Lower leg skin (tissue), 4 donors: ENCODE measurements at regions of chrX and their contacts with region 1.

Region 1: DNA sequence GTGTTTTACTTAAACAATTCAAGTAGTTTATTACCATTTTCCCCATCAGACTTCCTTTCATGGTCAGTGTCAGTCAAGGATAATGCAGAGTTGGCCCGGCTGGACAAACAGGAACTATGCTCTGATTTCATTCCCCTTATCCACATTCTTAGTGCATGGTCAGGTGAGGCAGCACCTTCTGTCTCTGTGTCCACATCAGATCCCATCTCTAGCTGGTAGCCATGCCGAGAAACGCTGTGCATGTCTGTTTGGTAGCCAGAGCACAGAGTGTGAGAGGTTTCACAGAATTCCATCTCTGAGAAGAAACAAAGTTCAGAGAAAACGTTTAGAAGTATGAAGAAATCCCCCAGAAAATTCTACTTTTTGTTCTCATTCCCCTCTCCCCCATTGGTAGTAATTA is 423.7 kb upstream of the TEX13C start:
- DNase-seq: no peak
- H3K4me3 ChIP-seq: no peak overlapping the region
- CTCF ChIP-seq: no peak
- POLR2A ChIP-seq: no peak

Region 2: DNA sequence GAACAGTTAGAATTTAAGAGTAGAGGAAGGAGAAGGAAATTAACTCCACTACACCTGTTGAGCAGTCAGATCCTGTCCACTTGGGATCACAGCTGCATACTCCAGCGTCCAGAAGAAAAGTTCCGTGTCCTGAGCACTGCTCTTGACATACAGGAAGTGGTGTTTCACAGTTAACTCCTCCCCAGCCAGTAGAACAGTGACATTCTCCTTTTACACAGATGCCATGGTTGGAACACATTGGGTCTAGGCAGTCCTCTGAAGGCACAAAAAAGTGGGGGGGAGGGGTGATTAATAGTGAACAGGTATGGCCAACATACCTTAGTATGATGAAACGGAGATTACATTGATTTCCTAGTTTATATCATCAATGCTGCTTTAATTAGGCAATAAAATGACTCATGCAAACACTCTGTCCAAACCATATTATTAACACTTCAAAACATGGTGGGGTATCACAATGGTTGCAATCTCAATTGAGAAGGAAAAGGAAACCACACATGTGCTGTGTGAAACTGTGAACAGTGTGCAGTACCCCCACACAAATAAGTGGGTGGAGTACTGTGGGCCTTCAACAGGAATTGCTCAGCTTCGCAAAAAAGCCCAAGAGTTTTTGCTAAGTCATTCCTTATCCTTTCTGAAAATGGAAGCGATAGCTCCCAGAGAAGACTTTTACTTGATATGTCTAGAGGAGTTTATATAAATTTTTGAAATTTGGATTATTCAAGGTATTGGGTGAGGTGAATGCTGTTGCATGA is 254.0 kb before region 1 on chrX:
- intact Hi-C with region 1: no loop called
- DNase-seq: no peak
- H3K4me3 ChIP-seq: no peak overlapping the region
- CTCF ChIP-seq: no peak
- POLR2A ChIP-seq: no peak

Region 3: DNA sequence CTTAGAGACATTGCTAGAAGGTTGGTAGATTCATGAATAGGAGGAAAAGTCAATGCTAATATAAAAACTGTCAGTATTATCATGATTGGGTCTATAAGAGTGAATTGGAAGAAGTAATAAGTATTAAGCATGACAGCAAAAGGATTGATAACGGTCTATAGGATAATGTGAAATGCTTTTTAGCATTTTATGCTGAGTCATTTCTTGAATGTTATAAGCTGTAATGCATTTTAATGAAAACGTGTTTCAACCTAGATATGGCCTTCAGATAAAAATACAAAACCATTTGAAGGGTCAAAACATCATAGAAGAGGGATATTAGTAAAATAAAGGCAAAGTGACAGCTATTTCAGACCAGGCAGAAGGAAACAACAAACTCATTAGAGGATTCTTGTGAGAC is 196.1 kb before region 1 on chrX:
- intact Hi-C with region 1: no loop called
- DNase-seq: no peak
- H3K4me3 ChIP-seq: no peak overlapping the region
- CTCF ChIP-seq: no peak
- POLR2A ChIP-seq: no peak

Region 4: GRCh38 chrX:124925681-124926080 is 29.7 kb after region 1 on chrX:
- intact Hi-C with region 1: loop called (anchors 2 kb)
- DNase-seq: no peak
- H3K4me3 ChIP-seq: no peak overlapping the region
- CTCF ChIP-seq: no peak
- POLR2A ChIP-seq: no peak